Psoas muscle (tissue), 8 donors: ENCODE measurements at regions of chr17 and their contacts with region 1.

Region 1: GRCh38 chr17:21376759-21377690 is 868 bp downstream of the KCNJ12 start:
- DNase-seq: peak; percentile 44 to 68
- ATAC-seq: peak in 3 of 4 donors; percentile 10 to 30 (median 25)
- H3K4me3 ChIP-seq: peak overlapping the region; percentile 68
- H3K27ac ChIP-seq: peak overlapping the region; percentile 87
- H3K4me1 ChIP-seq: peaks cover 24% of the 10 kb centered on the region
- H3K27me3 ChIP-seq: no peaks in the 10 kb centered on the region
- CTCF ChIP-seq: no peak

Region 2: GRCh38 chr17:21177854-21178600 is 199.0 kb before region 1 on chr17:
- intact Hi-C with region 1: no loop called
- DNase-seq: no peak
- ATAC-seq: no peak
- H3K4me3 ChIP-seq: no peak overlapping the region
- H3K27ac ChIP-seq: no peak overlapping the region
- H3K4me1 ChIP-seq: peaks cover 27% of the 10 kb centered on the region
- H3K27me3 ChIP-seq: no peaks in the 10 kb centered on the region
- CTCF ChIP-seq: no peak

Region 3: DNA sequence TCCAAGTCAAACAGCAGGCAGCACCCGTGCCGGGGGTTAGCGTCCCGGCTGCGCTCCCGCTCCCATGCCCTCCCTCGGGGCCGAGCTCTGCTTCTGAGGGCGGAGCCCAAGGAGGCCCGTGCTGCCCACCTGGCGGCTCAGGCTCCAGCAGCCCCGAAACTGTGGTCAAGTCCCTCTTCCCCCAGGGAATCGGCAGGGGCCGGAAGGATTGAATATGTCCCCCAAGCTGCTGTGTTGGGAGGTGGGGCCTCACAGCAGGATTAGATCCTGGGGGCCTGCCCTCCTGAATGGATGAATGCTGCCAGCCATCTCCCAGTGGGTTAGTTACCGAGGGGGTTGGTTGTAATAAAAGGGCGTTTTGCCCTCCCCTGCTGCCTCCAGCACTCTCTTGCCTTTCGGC is 58.6 kb before region 1 on chr17:
- intact Hi-C with region 1: loop called in 1 of 2 experiments (anchors 10 kb)
- DNase-seq: peak; percentile 11 to 50
- ATAC-seq: no peak
- H3K4me3 ChIP-seq: no peak overlapping the region
- H3K27ac ChIP-seq: no peak overlapping the region
- H3K4me1 ChIP-seq: no peaks in the 10 kb centered on the region
- H3K27me3 ChIP-seq: no peaks in the 10 kb centered on the region
- CTCF ChIP-seq: no peak

Region 4: DNA sequence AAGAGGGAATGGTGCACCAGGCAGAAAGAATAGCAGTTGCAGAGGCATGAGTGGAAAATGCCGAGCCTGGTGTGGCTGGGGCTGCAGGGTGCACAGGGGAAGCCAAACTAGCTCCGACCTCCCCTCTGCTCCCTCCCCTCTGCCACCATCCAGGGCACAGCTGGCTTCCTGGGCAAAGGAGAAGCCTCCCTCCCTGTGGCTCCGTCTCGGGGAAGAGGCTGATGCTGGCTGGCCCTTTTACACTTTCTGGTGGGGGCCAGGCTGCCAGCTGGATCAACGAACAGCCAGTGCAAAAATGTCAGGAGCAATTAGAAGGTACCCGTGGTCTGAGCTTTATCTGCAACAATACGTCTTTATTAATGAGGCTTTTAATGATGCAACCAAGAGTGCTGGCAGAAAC is 38.0 kb before region 1 on chr17:
- intact Hi-C with region 1: loop called in 1 of 2 experiments (anchors 5 kb)
- DNase-seq: peak in 1 of 2 donors; percentile 20
- ATAC-seq: no peak
- H3K4me3 ChIP-seq: no peak overlapping the region
- H3K27ac ChIP-seq: no peak overlapping the region
- H3K4me1 ChIP-seq: peaks cover 5% of the 10 kb centered on the region
- H3K27me3 ChIP-seq: no peaks in the 10 kb centered on the region
- CTCF ChIP-seq: no peak

Region 5: DNA sequence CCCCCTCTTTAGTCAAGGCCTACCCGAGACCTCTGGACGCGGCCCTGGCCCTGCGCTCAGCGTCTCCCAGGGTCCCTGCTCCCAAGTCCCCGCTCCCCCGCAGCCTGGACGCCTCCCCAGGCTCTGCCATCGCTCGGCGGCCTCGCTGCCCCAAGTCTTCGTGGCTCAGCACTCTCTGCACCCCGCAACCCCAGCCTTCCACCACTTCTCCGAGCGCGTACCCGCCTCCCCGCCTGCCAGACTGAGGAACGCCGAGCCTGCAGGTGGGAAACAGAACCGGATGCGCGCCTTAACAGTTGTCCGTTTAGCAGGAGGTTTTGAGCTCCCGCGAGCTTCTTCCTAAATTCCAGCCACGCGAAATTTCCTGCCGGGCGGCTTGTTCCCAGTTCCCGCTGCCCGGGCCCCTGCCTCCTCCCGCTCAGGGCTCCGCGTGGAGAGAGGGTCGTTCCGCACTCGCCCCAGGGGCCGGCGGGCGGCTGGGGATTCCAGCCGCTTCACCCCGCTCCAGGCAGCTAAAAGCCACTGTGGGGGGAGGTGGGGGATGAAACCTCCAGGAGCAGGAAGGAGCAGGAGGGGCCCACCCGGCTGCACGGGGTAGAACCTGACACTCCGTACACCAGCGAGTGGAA is 86.9 kb after region 1 on chr17:
- intact Hi-C with region 1: no loop called
- DNase-seq: no peak
- ATAC-seq: peak in 1 of 4 donors; percentile 21
- H3K4me3 ChIP-seq: peak overlapping the region; percentile 28
- H3K27ac ChIP-seq: no peak overlapping the region
- H3K4me1 ChIP-seq: no peaks in the 10 kb centered on the region
- H3K27me3 ChIP-seq: peaks cover 0 to 4% (median 0%) of the 10 kb centered on the region in 3 donors
- CTCF ChIP-seq: no peak

Region 6: DNA sequence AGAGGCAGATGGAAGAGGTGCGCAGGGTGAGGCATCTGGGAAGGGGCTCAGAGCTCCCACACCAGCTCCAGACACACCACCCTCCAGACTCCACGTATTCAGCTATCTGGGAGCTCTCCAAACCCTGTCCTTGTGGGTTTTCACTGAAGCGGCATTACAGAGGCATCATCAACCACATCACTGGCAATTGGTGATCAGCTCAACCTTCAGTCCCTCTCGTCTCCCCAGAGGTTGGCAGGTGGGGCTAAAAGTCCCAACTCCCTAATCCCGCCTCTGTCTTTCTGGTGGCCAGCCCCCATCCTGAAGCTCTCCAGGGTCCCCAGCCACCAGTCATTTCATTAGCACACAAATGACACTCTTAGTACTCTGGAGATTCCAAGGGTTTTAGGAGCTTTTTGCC is 123.0 kb after region 1 on chr17:
- intact Hi-C with region 1: no loop called
- DNase-seq: no peak
- ATAC-seq: no peak
- H3K4me3 ChIP-seq: no peak overlapping the region
- H3K27ac ChIP-seq: no peak overlapping the region
- H3K4me1 ChIP-seq: no peaks in the 10 kb centered on the region
- H3K27me3 ChIP-seq: no peaks in the 10 kb centered on the region
- CTCF ChIP-seq: no peak